Activated T-helper 2 cell treated with anti-CD3 and anti-CD28 coated beads, Interferon-gamma antibody, Interleukin-2, Interleukin-4, amounts not matched to agents 10 μg/mL and 5 μg/mL and 100 μg/mL, durations not matched to agents 14 hours and 24 hours and 36 hours (primary cell): ENCODE measurements at regions of chr22 and their contacts with region 1.

Region 1: GRCh38 chr22:16824716-16825678 is at the start of gene XKR3:
- DNase-seq: no peak
- H3K4me3 Mint-ChIP-seq: peak within 1 kb of the TSS; percentile 54
- H3K27ac Mint-ChIP-seq: peak within 1 kb of the TSS; percentile 75
- H3K4me1 Mint-ChIP-seq: peaks cover 28% of the 10 kb centered on the region
- H3K27me3 Mint-ChIP-seq: no peaks in the 10 kb centered on the region
- total RNA-seq, gene XKR3: not detected in 2 replicates

Region 2: DNA sequence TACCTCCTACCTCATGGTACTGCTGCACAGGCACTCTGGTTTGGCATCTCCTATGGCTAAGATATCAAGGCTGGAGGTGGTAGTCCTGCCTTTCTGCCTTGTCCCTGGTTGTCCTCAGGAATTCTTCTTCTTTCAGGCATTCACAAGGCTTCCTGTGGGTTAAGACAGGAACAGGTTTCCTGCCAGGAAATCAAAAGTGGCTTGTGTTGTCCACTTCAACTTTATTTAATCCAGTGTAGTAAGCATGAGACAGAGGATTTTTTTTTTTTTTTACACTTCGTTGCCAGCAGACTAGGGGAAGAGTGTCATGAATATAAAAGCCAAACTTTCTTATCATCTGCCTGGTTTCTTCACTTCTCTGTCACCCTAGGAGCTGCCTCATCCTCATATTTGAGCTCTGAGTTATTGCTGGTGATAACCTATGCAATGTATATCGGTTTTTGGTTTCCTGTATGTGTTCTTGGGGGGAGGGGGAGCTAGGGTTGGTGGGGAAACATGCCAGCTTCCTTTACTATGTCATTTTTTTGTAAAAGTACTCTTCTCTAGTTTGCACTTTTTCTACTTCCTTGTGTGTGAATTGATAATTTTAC is 50.0 kb before region 1 on chr22:
- intact Hi-C with region 1: loop called (anchors 2 kb)
- DNase-seq: no peak
- H3K4me3 Mint-ChIP-seq: no peak overlapping the region
- H3K27ac Mint-ChIP-seq: no peak overlapping the region
- H3K4me1 Mint-ChIP-seq: peaks cover 11% of the 10 kb centered on the region
- H3K27me3 Mint-ChIP-seq: no peaks in the 10 kb centered on the region